ENCODE measurements at regions of chr18 and their contacts with region 1.

Region 1: DNA sequence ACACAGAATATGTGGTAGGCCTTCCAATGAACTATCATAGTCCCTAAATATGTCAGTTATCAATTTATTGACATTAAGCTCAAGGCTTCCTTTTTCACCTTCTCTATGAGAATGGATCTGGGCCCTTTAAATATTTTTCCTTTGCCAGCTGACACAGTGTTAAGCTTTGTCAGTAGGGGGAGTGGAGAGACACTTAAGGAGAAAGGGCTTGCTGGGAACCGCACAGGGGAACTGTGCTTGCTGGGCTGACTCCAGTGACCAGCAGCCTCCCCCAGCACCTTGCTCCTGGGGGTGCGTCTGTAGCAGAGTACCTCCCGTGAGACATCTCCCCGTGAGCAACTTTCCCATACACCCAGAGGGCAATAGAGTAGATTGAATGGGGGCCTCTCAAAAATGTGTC is 6.5 kb upstream of the PTPN2 start:
- DNase-seq: no peak
- H3K4me3 ChIP-seq: no peak overlapping the region
- H3K27ac ChIP-seq: no peak overlapping the region
- H3K4me1 ChIP-seq: peaks cover 0 to 10% (median 2%) of the 10 kb centered on the region in 4 experiments; a peak in 3 of 7 replicates
- H3K27me3 ChIP-seq: no peaks in the 10 kb centered on the region
- CTCF ChIP-seq: peak in 2 of 3 experiments; percentile 2 to 45; a peak in 3 of 4 replicates
- EP300 ChIP-seq: no peak
- POLR2A ChIP-seq: no peak
- RAD21 ChIP-seq: peak in 1 of 2 experiments; percentile 30; a peak in 2 of 4 replicates

Region 2: GRCh38 chr18:12744103-12744502 is 146.4 kb before region 1 on chr18:
- CTCF ChIA-PET with region 1: interaction called, 10 read pairs
- POLR2A ChIA-PET with region 1: no interaction called
- DNase-seq: no peak
- H3K4me3 ChIP-seq: no peak overlapping the region
- H3K27ac ChIP-seq: no peak overlapping the region
- H3K4me1 ChIP-seq: no peaks in the 10 kb centered on the region; a peak in 1 of 7 replicates
- H3K27me3 ChIP-seq: no peaks in the 10 kb centered on the region
- CTCF ChIP-seq: peak in 1 of 3 experiments; percentile 20; a peak in 2 of 4 replicates
- EP300 ChIP-seq: no peak
- POLR2A ChIP-seq: no peak
- RAD21 ChIP-seq: peak; percentile 43 to 49

Region 3: GRCh38 chr18:12816451-12816850 is 74.1 kb before region 1 on chr18:
- CTCF ChIA-PET with region 1: interaction called, 10 read pairs
- POLR2A ChIA-PET with region 1: no interaction called
- DNase-seq: no peak
- H3K4me3 ChIP-seq: no peak overlapping the region
- H3K27ac ChIP-seq: no peak overlapping the region
- H3K4me1 ChIP-seq: peaks cover 5 to 8% (median 7%) of the 10 kb centered on the region in 4 experiments; a peak in 5 of 7 replicates
- H3K27me3 ChIP-seq: no peaks in the 10 kb centered on the region
- CTCF ChIP-seq: no peak
- EP300 ChIP-seq: no peak
- POLR2A ChIP-seq: no peak
- RAD21 ChIP-seq: no peak

Region 4: DNA sequence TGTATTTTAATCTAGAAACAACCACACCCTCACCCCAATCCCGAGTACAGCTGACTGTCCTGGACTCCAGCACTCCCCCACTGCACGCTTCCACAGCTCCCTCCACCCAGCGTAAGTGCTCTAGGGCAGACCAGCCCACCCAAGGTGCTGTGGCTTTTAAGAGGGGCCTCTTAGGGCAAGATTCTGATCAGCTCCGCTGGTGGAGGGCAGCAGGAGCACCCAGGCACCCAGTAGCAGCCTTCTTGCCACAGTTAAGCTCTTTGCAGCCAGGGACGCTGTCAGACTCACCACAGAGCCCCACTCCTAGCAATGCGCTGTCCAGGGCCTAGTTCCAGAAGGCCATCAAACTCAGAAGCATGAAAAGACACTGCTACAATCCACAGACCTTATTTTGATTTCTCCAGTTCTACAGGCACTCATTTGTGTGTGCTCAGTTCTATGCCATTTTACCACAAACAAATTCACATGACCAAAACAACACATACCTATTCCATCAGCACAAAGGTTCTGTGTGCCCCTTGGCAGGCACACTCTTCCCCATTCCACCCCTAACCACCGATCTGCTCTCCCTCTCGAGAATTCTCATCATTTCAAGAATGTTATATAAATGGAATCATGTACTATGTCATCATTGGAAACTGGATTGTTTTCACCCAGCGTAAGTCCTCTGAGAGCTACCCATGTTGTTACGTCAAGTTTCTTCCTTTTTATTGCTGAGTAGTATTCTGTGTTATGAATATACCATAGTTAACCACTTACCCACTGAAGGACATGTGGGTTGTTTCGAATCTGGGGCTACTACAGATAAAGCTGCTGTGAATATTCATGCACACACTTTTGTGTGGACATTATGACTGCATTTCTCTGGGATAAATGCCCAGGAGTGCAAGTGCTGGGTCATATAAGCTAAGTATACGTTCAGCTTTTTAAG is 46.8 kb before region 1 on chr18:
- CTCF ChIA-PET with region 1: interaction called, 12 read pairs
- POLR2A ChIA-PET with region 1: interaction called, 3 read pairs
- DNase-seq: no peak
- H3K4me3 ChIP-seq: no peak overlapping the region
- H3K27ac ChIP-seq: no peak overlapping the region
- H3K4me1 ChIP-seq: peaks cover 0 to 7% (median 2%) of the 10 kb centered on the region in 4 experiments; a peak in 3 of 7 replicates
- H3K27me3 ChIP-seq: no peaks in the 10 kb centered on the region
- CTCF ChIP-seq: no peak
- EP300 ChIP-seq: no peak
- POLR2A ChIP-seq: no peak
- RAD21 ChIP-seq: no peak

Region 5: DNA sequence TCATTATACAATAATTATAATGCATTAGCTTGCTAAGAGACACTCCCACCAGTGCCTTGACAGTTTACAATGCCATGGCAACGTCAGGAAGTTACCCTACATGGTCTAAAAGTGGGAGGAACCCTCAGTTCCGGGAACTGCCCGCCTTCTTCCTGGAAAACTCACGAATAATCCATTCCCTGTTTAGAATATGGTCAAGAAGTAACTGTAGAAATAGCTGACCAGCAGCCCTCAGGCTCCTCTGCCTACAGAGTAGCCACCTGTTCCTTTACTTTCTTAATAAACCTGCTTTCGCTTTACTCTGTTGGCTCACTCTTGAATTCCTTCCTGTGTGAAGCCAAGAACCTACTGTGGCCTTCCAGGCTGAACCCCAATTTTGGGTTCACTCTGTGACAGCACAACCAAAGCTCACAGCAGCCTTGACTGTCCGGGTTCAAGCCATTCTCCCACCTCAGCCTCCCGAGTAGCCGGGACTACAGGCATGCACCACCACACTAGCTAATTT is 13.6 kb after region 1 on chr18:
- CTCF ChIA-PET with region 1: interaction called, 11 read pairs
- POLR2A ChIA-PET with region 1: interaction called, 3 read pairs
- DNase-seq: no peak
- H3K4me3 ChIP-seq: no peak overlapping the region
- H3K27ac ChIP-seq: no peak overlapping the region
- H3K4me1 ChIP-seq: no peaks in the 10 kb centered on the region
- H3K27me3 ChIP-seq: no peaks in the 10 kb centered on the region; a peak in 1 of 7 replicates
- CTCF ChIP-seq: no peak
- EP300 ChIP-seq: no peak
- POLR2A ChIP-seq: no peak
- RAD21 ChIP-seq: no peak

Measured in H1 (cell line).